ENCODE measurements at regions of chr2 and their contacts with region 1.

Region 1: DNA sequence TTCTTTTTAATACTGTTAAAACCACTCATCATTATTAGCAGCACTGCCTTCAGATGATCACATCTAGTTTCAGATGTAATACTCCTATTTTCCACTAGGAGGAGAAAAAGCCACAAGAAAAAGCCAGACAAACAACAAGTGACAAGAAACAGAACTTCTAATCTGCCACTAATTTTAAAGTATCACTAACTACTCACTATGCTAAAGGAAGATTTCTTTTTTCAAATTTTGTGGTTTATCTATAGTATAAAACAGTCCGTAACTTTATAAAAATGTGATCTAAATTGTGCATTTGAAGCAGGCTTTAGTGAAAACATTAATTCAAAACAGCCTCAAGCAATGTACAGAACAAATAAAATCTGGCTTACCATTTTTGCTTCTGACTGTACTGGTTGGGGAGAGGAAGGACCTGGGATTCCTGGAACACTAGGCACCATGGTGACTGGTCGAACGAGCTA is 56.8 kb downstream of the ATF2 start:
- DNase-seq: peak in 3 of 14 experiments; percentile 66 to 68 (median 68)
- ATAC-seq: peak; percentile 75
- H3K4me3 ChIP-seq: no peak overlapping the region
- H3K4me3 Mint-ChIP-seq: no peak overlapping the region
- H3K27ac ChIP-seq: no peak overlapping the region
- H3K27ac Mint-ChIP-seq: peak overlapping the region; percentile 24
- H3K4me1 ChIP-seq: no peaks in the 10 kb centered on the region
- H3K4me1 Mint-ChIP-seq: no peaks in the 10 kb centered on the region
- H3K27me3 ChIP-seq: no peaks in the 10 kb centered on the region
- H3K27me3 Mint-ChIP-seq: no peaks in the 10 kb centered on the region
- CTCF ChIP-seq: peak; percentile 84

Region 2: DNA sequence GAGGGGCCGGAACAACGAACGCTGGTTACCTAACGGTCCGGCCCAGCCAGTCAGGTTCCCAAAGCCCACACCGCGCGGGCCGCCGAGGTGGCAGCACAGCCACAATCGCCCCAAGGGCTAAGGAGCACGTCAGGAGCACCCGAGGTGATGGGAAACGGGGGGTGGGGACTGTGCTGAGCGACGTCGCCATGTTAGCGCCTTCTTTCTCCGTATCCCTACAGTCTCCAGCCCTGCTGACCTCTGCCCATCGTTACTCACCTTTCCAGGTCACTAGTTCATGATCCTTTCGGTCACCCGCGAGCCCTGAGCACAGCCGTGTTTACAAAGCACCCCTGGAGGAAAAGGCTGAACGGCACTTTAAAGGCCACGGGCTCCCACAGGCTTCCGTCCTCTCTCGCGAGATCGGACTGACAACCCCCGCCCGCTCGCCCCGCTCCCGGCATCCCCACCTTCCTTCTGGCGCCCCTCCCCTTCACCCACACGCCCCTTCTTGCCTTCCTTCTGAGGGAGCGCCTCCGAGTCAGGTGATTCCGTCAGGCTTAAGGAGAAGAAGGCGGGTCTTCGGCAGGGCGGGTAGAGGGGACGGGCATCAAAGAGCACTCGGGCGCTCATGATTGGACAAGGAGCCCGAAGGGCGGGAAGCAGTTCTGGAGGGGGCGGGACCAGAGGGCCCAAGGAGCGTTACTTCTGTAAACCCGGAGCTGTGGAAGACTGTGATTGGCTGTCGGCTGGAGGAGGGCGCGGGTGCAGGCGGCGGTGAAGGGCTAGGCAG is 56.7 kb after region 1 on chr2 and contains the start of gene ATF2:
- CTCF ChIA-PET with region 1: no interaction called
- POLR2A ChIA-PET with region 1: interaction called, 7 read pairs
- intact Hi-C with region 1: loop called in 1 of 2 experiments (anchors 2 kb)
- DNase-seq: peak; percentile 94 to 100 (median 96)
- ATAC-seq: peak; percentile 90
- H3K4me3 ChIP-seq: peak within 1 kb of the TSS; percentile 90
- H3K4me3 Mint-ChIP-seq: peak within 1 kb of the TSS; percentile 91
- H3K27ac ChIP-seq: peak within 1 kb of the TSS; percentile 84 to 90
- H3K27ac Mint-ChIP-seq: peak within 1 kb of the TSS; percentile 90
- H3K4me1 ChIP-seq: peaks cover 18% of the 10 kb centered on the region
- H3K4me1 Mint-ChIP-seq: peaks cover 66% of the 10 kb centered on the region
- H3K27me3 ChIP-seq: no peaks in the 10 kb centered on the region
- H3K27me3 Mint-ChIP-seq: no peaks in the 10 kb centered on the region
- CTCF ChIP-seq: no peak
- total RNA-seq, gene ATF2: 44.7 to 44.8 TPM

Region 3: DNA sequence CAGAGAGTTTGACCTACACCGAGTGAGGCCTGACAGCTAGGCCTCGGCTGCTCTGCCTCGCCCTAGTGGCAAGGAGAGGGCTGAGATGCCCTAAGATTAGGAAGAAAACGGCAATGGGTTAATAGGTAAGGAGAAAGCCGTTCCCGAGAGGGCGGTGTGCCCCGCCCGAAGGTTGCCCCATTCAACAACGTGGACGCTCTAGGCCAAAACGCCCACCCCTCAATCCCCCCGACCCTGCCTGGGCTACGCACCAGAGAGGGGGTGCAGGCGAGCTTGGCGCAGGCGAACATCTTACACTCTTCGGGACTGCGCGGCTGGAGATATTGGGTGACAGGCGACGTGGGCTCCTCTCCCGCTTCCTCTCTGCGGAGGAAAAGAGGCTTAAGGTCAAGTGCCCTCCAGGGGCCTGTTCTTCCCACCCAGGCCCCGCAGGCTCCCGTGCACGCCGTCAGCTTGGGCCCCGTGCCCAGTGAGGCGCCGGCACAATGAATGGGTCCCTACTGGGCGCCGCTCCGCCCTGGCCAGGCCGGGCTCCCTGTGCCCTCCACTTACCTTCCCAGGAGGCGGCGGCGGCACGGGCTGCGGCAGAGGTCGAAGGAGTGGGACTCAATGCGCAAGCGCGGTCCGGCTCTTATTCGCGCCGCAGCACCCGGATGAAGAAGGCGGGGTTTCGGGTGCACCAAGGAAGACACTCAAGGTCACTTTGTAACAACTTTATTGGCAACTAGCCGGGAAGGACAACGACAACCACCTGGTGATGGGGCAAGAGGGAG is 70.1 kb after region 1 on chr2 and contains the start of gene ATP5MC3:
- CTCF ChIA-PET with region 1: no interaction called
- POLR2A ChIA-PET with region 1: no interaction called
- intact Hi-C with region 1: loop called (anchors 5 kb)
- DNase-seq: peak; percentile 85 to 98 (median 89)
- ATAC-seq: peak; percentile 88
- H3K4me3 ChIP-seq: peak within 1 kb of the TSS; percentile 73
- H3K4me3 Mint-ChIP-seq: peak within 1 kb of the TSS; percentile 96
- H3K27ac ChIP-seq: peak within 1 kb of the TSS; percentile 49 to 75
- H3K27ac Mint-ChIP-seq: peak within 1 kb of the TSS; percentile 84
- H3K4me1 ChIP-seq: peaks cover 16% of the 10 kb centered on the region
- H3K4me1 Mint-ChIP-seq: peaks cover 41% of the 10 kb centered on the region
- H3K27me3 ChIP-seq: no peaks in the 10 kb centered on the region
- H3K27me3 Mint-ChIP-seq: no peaks in the 10 kb centered on the region
- CTCF ChIP-seq: no peak
- total RNA-seq, gene ATP5MC3: 79.5 to 81.6 TPM

Region 4: DNA sequence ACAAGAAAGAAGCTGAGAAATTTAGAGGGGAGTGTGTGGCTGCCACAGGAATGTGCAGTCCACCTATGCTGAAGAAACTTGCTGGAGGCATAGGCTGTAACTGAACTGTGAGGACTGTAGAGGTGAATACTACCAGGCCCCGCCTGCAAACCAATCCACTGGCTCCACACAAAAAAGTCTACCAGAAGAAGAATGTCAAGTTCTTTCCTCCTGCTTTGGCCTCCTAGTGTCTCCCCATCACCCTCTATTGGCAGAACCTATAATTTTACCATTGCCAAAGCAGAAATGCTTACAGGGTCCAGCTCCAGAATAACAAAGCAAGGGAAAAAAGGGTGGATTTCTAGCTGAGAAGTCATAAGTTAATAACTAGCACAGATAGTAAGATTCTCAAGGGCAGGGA is 76.1 kb after region 1 on chr2:
- CTCF ChIA-PET with region 1: no interaction called
- POLR2A ChIA-PET with region 1: no interaction called
- intact Hi-C with region 1: loop called (anchors 5 kb)
- DNase-seq: peak in 3 of 14 experiments; percentile 27 to 44 (median 39)
- ATAC-seq: peak; percentile 69
- H3K4me3 ChIP-seq: no peak overlapping the region
- H3K4me3 Mint-ChIP-seq: no peak overlapping the region
- H3K27ac ChIP-seq: no peak overlapping the region
- H3K27ac Mint-ChIP-seq: no peak overlapping the region
- H3K4me1 ChIP-seq: no peaks in the 10 kb centered on the region
- H3K4me1 Mint-ChIP-seq: peaks cover 2% of the 10 kb centered on the region
- H3K27me3 ChIP-seq: peaks cover 0 to 6% of the 10 kb centered on the region in 2 experiments
- H3K27me3 Mint-ChIP-seq: peaks cover 35% of the 10 kb centered on the region
- CTCF ChIP-seq: peak; percentile 27

Region 5: GRCh38 chr2:175282290-175282689 is 171.1 kb after region 1 on chr2:
- CTCF ChIA-PET with region 1: no interaction called
- POLR2A ChIA-PET with region 1: no interaction called
- intact Hi-C with region 1: loop called (anchors 1 to 2 kb)
- DNase-seq: peak in 3 of 14 experiments; percentile 13 to 37 (median 23)
- ATAC-seq: peak; percentile 44
- H3K4me3 ChIP-seq: no peak overlapping the region
- H3K4me3 Mint-ChIP-seq: no peak overlapping the region
- H3K27ac ChIP-seq: no peak overlapping the region
- H3K27ac Mint-ChIP-seq: no peak overlapping the region
- H3K4me1 ChIP-seq: no peaks in the 10 kb centered on the region
- H3K4me1 Mint-ChIP-seq: no peaks in the 10 kb centered on the region
- H3K27me3 ChIP-seq: no peaks in the 10 kb centered on the region
- H3K27me3 Mint-ChIP-seq: peaks cover 7% of the 10 kb centered on the region
- CTCF ChIP-seq: peak; percentile 45